ENCODE measurements at regions of chr9 and their contacts with region 1.

Region 1: DNA sequence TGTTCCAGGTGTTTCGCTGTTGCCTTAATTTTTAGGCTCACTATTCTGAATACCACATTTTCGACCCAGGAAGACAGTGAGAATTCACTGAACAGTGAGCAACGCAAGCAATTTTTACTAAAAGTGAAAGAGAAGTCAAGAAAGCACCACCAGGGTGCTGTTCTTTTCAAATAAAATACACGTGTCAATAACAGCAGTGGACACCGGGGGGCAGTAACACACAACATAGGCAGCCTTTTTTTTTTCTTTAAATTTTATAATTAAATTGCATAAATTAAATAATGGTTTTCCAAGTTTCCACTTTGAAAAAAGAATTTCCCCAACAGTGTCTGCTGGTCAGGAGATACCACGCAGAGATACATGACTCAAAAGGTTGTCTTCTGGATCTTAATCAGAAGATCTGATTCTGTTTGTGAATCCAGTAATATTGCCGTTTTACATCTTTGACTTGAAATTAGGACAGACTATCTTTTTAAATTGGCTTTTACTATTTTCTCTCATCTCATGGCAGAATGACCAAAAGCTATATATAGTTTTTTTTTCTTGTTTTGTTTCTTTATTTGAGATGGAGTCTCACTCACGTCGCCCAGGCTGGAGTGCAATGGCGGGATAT is 47.1 kb upstream of the SH3GL2 start:
- DNase-seq: no peak
- H3K4me3 ChIP-seq: no peak overlapping the region
- H3K27me3 ChIP-seq: 0 out of 2 replicates have a peak, but pooled peaks cover 2% of the 10 kb centered on the region
- CTCF ChIP-seq: peak; percentile 72

Region 2: GRCh38 chr9:17802249-17802857 is 270.6 kb after region 1 on chr9:
- CTCF ChIA-PET with region 1: interaction called, 65 read pairs
- POLR2A ChIA-PET with region 1: no interaction called
- DNase-seq: no peak
- H3K4me3 ChIP-seq: no peak overlapping the region
- H3K27me3 ChIP-seq: peaks cover 1% of the 10 kb centered on the region; the same call in 1 of the 2 replicates
- CTCF ChIP-seq: peak; percentile 61

Measured in BJ (cell line).